Activated naive CD4-positive, alpha-beta T cell treated with anti-CD3 and anti-CD28 coated beads, Interleukin-2, amount 10 ng/mL, durations not matched to agents 7 days and 5 days (primary cell): ENCODE measurements at regions of chr6 and their contacts with region 1.

Region 1: GRCh38 chr6:137799950-137800568 is 67.0 kb upstream of the TNFAIP3 start:
- DNase-seq: peak; percentile 64
- H3K4me3 Mint-ChIP-seq: no peak overlapping the region
- H3K27ac Mint-ChIP-seq: no peak overlapping the region
- H3K4me1 Mint-ChIP-seq: peaks cover 55% of the 10 kb centered on the region
- H3K27me3 Mint-ChIP-seq: no peaks in the 10 kb centered on the region

Region 2: DNA sequence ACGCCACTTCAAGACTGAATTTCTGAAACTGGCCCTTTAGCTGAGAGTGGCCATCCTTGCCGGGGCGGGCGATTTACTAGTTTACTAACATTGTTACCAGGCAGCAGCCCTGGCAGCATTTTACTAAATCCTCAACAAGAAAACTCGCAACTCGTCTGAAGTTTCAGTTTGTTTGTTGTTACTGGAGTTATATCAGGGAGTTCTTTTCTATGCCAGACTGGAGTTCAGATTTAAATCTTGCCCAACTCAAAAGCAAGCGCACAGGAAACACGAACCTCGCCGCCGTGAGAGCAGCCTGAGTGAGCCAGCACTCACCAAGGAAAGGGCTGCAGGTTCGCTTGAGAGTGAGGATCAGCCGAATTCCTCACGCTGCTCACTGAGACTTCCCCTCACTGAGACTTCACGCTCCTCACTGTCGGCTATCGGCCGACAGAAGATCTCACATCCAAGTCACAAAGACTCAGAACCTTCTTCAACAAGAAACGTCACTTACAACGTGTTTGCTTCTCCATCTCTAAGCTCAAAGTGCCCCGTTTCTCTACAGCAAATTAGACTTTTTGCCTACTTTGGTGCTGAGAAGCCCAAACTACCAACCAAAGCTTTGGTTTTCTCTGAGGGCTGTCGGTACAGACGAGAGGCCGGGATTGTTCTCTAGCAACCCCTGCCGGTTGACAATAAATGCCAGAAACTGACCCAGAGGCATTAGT is 384.8 kb before region 1 on chr6:
- CTCF ChIA-PET with region 1: no interaction called
- DNase-seq: peak; percentile 78
- H3K4me3 Mint-ChIP-seq: peak overlapping the region; percentile 70
- H3K27ac Mint-ChIP-seq: peak overlapping the region; percentile 74
- H3K4me1 Mint-ChIP-seq: peaks cover 12% of the 10 kb centered on the region
- H3K27me3 Mint-ChIP-seq: peaks cover 8% of the 10 kb centered on the region

Region 3: GRCh38 chr6:137717074-137718073 is 82.7 kb before region 1 on chr6:
- CTCF ChIA-PET with region 1: interaction called, 21 read pairs
- DNase-seq: peak; percentile 84
- H3K4me3 Mint-ChIP-seq: no peak overlapping the region
- H3K27ac Mint-ChIP-seq: peak overlapping the region; percentile 78
- H3K4me1 Mint-ChIP-seq: peaks cover 55% of the 10 kb centered on the region
- H3K27me3 Mint-ChIP-seq: no peaks in the 10 kb centered on the region

Region 4: GRCh38 chr6:137811121-137811915 is 11.3 kb after region 1 on chr6:
- CTCF ChIA-PET with region 1: interaction called, 21 read pairs
- DNase-seq: peak; percentile 78
- H3K4me3 Mint-ChIP-seq: peak overlapping the region; percentile 14
- H3K27ac Mint-ChIP-seq: peak overlapping the region; percentile 61
- H3K4me1 Mint-ChIP-seq: peaks cover 40% of the 10 kb centered on the region
- H3K27me3 Mint-ChIP-seq: no peaks in the 10 kb centered on the region

Region 5: GRCh38 chr6:137823826-137824555 is 23.9 kb after region 1 on chr6:
- CTCF ChIA-PET with region 1: interaction called, 29 read pairs
- DNase-seq: peak; percentile 84
- H3K4me3 Mint-ChIP-seq: peak overlapping the region; percentile 58
- H3K27ac Mint-ChIP-seq: peak overlapping the region; percentile 99
- H3K4me1 Mint-ChIP-seq: peaks cover 78% of the 10 kb centered on the region
- H3K27me3 Mint-ChIP-seq: no peaks in the 10 kb centered on the region

Region 6: GRCh38 chr6:137944793-137945498 is 144.9 kb after region 1 on chr6:
- CTCF ChIA-PET with region 1: interaction called, 46 read pairs
- DNase-seq: peak; percentile 42
- H3K4me3 Mint-ChIP-seq: no peak overlapping the region
- H3K27ac Mint-ChIP-seq: no peak overlapping the region
- H3K4me1 Mint-ChIP-seq: peaks cover 23% of the 10 kb centered on the region
- H3K27me3 Mint-ChIP-seq: no peaks in the 10 kb centered on the region

Region 7: DNA sequence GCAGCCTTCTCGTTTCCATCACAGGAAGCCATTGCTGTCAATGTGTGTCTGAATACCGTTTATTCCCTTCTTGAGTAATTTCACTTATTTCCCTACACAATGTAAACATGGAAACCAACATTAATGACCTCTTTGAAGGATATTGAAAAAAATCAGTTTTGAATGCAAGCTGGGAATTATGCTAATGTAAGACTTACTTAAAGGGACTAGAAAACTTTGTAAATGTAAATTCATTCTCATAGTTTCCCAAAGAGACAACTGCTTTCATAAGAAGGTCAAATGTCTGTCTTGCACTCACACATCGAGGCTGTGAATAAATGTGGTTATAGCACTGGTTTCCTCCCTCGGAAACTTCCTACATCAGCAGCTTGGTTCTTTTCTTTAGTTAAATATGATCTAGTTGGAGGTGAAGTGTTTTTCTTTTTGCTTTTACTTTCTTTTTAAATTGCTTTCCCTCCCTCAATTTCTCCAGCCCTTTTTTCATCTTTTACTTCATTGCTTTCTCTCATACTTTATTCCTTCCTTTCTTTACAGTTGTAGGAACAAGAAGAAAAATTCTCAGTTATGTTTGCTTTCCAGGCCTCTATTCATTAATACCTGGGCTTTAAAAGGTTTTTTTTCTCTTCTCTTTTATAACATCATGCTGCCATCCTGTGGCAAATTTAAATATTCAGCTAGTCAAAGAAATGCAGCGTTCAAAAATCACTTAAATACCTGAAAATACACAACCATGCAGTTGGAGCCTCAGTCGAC is 175.3 kb after region 1 on chr6:
- CTCF ChIA-PET with region 1: interaction called, 18 read pairs
- DNase-seq: peak; percentile 29
- H3K4me3 Mint-ChIP-seq: peak overlapping the region; percentile 67
- H3K27ac Mint-ChIP-seq: peak overlapping the region; percentile 95
- H3K4me1 Mint-ChIP-seq: peaks cover 40% of the 10 kb centered on the region
- H3K27me3 Mint-ChIP-seq: no peaks in the 10 kb centered on the region

Region 8: GRCh38 chr6:138161338-138162110 is 361.5 kb after region 1 on chr6 and contains the start of gene ARFGEF3:
- CTCF ChIA-PET with region 1: no interaction called
- DNase-seq: peak; percentile 66
- H3K4me3 Mint-ChIP-seq: peak within 1 kb of the TSS; percentile 63
- H3K27ac Mint-ChIP-seq: no peak within 1 kb of the TSS
- H3K4me1 Mint-ChIP-seq: peaks cover 14% of the 10 kb centered on the region
- H3K27me3 Mint-ChIP-seq: peaks cover 72% of the 10 kb centered on the region